ENCODE measurements at regions of chr6 and their contacts with region 1.

Region 1: DNA sequence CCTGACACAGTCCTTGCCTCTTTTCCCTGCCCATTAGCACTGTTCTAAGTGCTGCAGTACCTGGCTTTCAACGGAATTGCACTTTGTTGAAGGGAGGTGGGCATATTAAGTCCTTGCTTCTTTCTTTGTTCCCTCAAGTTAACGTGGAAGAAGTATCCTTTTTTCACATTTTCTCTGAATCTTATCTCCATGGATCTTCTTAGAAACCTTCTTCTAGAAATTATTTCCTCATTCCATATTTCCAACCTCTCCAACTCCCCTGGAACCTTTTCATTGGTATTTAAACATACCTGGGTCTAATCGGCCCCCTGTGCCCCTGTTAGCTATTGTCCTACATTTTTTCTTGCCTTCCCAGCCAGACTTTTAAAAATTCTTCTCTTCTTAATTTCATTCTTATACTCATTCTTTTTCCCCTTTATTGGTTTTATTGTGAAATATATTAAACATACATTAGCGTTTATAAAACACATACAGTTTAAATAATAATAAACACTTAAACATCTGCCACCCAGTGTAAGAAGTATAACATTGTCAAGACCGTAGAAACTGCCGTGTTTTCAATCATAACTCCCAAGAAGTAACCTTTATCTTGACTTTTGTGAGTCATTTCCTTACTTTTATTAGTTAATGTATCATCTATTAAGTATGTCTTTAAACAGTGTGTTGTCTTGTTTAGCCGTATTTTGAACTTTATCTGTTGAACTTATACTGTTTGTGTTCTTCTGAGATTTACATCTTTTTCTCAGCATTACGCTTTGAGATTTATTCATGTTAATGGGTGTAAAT is 118.2 kb downstream of the CDKAL1 start:
- DNase-seq: peak; percentile 86
- ATAC-seq: peak; percentile 90
- H3K4me3 ChIP-seq: peak overlapping the region; percentile 59
- H3K27ac ChIP-seq: peak overlapping the region; percentile 91
- H3K4me1 ChIP-seq: peaks cover 31% of the 10 kb centered on the region
- H3K27me3 ChIP-seq: no peaks in the 10 kb centered on the region
- CTCF ChIP-seq: no peak; the same call in 1 of the 2 replicates

Region 2: GRCh38 chr6:20401205-20402091 is 251.0 kb before region 1 on chr6 and contains the start of gene E2F3:
- CTCF ChIA-PET with region 1: no interaction called
- POLR2A ChIA-PET with region 1: no interaction called
- intact Hi-C with region 1: loop called (anchors 10 kb)
- DNase-seq: peak; percentile 99
- ATAC-seq: peak; percentile 81
- H3K4me3 ChIP-seq: peak within 1 kb of the TSS; percentile 90
- H3K27ac ChIP-seq: peak within 1 kb of the TSS; percentile 96
- H3K4me1 ChIP-seq: peaks cover 15% of the 10 kb centered on the region
- H3K27me3 ChIP-seq: peaks cover 3% of the 10 kb centered on the region; the same call in 1 of the 2 replicates
- CTCF ChIP-seq: no peak
- total RNA-seq, gene E2F3: 8.8 and 10.8 TPM in 2 replicates

Region 3: GRCh38 chr6:20564269-20564668 is 88.2 kb before region 1 on chr6:
- CTCF ChIA-PET with region 1: no interaction called
- POLR2A ChIA-PET with region 1: no interaction called
- intact Hi-C with region 1: loop called (anchors 5 kb)
- DNase-seq: peak; percentile 67
- ATAC-seq: no peak
- H3K4me3 ChIP-seq: no peak overlapping the region
- H3K27ac ChIP-seq: no peak overlapping the region
- H3K4me1 ChIP-seq: peaks cover 5% of the 10 kb centered on the region
- H3K27me3 ChIP-seq: no peaks in the 10 kb centered on the region
- CTCF ChIP-seq: peak; percentile 78

Region 4: DNA sequence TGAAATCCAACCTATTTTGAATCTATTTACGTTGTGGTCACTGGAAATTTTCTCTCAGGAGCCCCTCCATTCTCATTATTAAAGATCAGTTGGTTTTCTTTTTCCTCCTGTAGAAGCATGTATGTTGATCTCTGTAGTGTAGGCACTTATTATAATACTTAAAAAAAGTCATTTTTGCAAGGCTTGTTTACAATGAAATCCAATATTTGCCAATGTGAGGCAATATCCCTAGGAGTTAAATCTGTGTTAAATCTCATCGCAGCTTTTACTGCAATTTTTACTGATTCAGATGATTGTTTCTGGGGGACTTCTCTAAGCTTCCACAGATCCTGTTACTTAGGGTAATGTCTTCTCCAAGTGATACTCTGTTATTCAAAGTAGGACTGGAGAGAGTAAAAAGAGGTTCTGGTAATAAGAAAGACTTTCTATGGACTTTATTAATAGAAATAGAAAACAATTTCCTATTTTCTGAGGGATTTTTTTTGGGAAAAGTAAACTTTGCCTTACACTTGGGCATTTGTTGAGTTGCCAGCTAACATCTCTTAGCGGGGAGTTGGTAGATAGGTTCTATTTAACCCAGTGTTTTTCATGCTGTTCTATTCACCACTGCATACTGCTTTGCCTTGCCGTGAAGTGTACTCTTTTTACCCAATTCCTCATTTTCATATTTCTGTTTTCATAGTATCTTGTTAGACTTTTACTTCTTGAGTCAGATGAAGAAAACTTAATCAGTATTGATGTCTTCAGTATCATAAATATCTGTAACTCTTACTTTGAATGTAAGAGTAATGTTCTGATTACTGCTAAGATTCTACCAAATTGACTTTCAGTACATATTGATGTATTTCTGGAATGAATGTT is 69.7 kb before region 1 on chr6:
- CTCF ChIA-PET with region 1: no interaction called
- POLR2A ChIA-PET with region 1: no interaction called
- intact Hi-C with region 1: loop called (anchors 5 kb)
- DNase-seq: no peak
- ATAC-seq: no peak
- H3K4me3 ChIP-seq: no peak overlapping the region
- H3K27ac ChIP-seq: no peak overlapping the region
- H3K4me1 ChIP-seq: no peaks in the 10 kb centered on the region
- H3K27me3 ChIP-seq: no peaks in the 10 kb centered on the region
- CTCF ChIP-seq: no peak

Region 5: GRCh38 chr6:20868397-20869096 is 216.1 kb after region 1 on chr6:
- CTCF ChIA-PET with region 1: no interaction called
- POLR2A ChIA-PET with region 1: no interaction called
- intact Hi-C with region 1: loop called (anchors 10 kb)
- DNase-seq: no peak
- ATAC-seq: no peak
- H3K4me3 ChIP-seq: no peak overlapping the region
- H3K27ac ChIP-seq: no peak overlapping the region
- H3K4me1 ChIP-seq: peaks cover 15% of the 10 kb centered on the region
- H3K27me3 ChIP-seq: no peaks in the 10 kb centered on the region
- CTCF ChIP-seq: no peak

Region 6: GRCh38 chr6:21003780-21004541 is 351.5 kb after region 1 on chr6:
- CTCF ChIA-PET with region 1: no interaction called
- POLR2A ChIA-PET with region 1: no interaction called
- intact Hi-C with region 1: loop called (anchors 5 kb)
- DNase-seq: peak; percentile 93
- ATAC-seq: peak; percentile 68
- H3K4me3 ChIP-seq: peak overlapping the region; percentile 34; the same call in 1 of the 2 replicates
- H3K27ac ChIP-seq: peak overlapping the region; percentile 79
- H3K4me1 ChIP-seq: peaks cover 49% of the 10 kb centered on the region
- H3K27me3 ChIP-seq: no peaks in the 10 kb centered on the region
- CTCF ChIP-seq: no peak

Region 7: GRCh38 chr6:21780679-21781078 is 1128.2 kb after region 1 on chr6:
- CTCF ChIA-PET with region 1: no interaction called
- POLR2A ChIA-PET with region 1: no interaction called
- intact Hi-C with region 1: no loop called
- DNase-seq: no peak
- ATAC-seq: no peak
- H3K4me3 ChIP-seq: no peak overlapping the region
- H3K27ac ChIP-seq: no peak overlapping the region
- H3K4me1 ChIP-seq: no peaks in the 10 kb centered on the region
- H3K27me3 ChIP-seq: no peaks in the 10 kb centered on the region
- CTCF ChIP-seq: no peak